Dorsolateral prefrontal cortex (tissue), 120 donors: ENCODE measurements at regions of chr7 and their contacts with region 1.

Region 1: GRCh38 chr7:99325545-99326407 is at the start of gene ARPC1A:
- DNase-seq: peak; percentile 60 to 91 (median 76)
- H3K4me3 ChIP-seq: peak within 1 kb of the TSS; percentile 61 to 100 (median 98)
- H3K27ac ChIP-seq: peak within 1 kb of the TSS in 57 of 59 donors; percentile 29 to 96 (median 83)
- H3K27me3 ChIP-seq: no peaks in the 10 kb centered on the region
- CTCF ChIP-seq: peak in 34 of 56 donors; percentile 3 to 63 (median 30)
- total RNA-seq, gene ARPC1A: 84.1 to 180 (median 126) TPM

Region 2: DNA sequence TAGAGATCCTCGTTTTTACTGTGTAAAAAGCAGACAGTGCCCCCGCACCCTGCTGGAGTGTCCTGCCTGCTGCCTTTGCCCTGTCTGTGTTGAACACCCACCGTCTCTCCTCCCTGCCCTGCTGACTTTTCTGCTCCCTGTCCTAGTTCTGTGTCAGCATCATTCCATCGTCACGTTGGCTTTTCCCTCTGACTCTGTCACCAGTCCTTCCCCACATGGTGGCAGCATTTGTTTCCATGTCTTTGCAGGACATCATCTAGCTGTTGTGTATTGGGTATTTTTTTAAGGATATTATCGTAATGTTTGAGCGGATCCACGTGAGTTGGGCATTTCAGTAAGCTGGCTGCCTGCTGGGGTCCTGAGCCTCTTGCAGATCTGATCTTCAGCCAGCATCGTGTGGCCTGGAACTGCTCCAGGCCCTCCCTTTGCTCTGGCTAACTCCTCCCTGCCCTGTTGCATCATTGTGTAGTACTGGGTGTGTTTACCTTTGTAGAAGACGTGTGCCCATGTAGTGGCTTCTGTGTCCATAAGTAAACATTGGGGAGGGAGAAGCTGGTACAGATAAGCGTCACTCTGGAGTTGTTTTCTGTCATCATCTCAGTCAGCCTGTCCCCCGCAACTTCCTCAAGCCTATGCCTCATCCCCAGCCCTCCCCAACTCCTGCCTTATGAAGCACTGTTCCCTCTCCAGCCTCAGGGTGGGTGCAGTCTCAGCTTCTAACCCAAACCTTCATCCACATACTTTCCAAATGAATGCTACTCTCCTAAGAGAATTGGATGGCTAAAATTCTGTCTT is 403.2 kb before region 1 on chr7:
- intact Hi-C with region 1: loop called in 1 of 2 experiments (anchors 10 kb)
- DNase-seq: peak in 5 of 10 donors; percentile 30 to 75 (median 47)
- H3K4me3 ChIP-seq: peak overlapping the region in 2 of 59 donors; percentile 5 to 9
- H3K27ac ChIP-seq: peak overlapping the region in 29 of 59 donors; percentile 12 to 79 (median 41)
- H3K27me3 ChIP-seq: no peaks in the 10 kb centered on the region
- CTCF ChIP-seq: peak in 48 of 56 donors; percentile 8 to 59 (median 34)

Region 3: GRCh38 chr7:99374103-99375064 is 48.6 kb after region 1 on chr7 and contains the start of gene ARPC1B:
- intact Hi-C with region 1: loop called in 1 of 2 experiments (anchors 5 kb)
- DNase-seq: peak in 1 of 10 donors; percentile 59
- H3K4me3 ChIP-seq: peak within 1 kb of the TSS; percentile 48 to 84 (median 73)
- H3K27ac ChIP-seq: peak within 1 kb of the TSS in 49 of 59 donors; percentile 14 to 89 (median 68)
- H3K27me3 ChIP-seq: no peaks in the 10 kb centered on the region
- CTCF ChIP-seq: no peak
- total RNA-seq, gene ARPC1B: 5.2 to 52.6 (median 17.8) TPM

Region 4: DNA sequence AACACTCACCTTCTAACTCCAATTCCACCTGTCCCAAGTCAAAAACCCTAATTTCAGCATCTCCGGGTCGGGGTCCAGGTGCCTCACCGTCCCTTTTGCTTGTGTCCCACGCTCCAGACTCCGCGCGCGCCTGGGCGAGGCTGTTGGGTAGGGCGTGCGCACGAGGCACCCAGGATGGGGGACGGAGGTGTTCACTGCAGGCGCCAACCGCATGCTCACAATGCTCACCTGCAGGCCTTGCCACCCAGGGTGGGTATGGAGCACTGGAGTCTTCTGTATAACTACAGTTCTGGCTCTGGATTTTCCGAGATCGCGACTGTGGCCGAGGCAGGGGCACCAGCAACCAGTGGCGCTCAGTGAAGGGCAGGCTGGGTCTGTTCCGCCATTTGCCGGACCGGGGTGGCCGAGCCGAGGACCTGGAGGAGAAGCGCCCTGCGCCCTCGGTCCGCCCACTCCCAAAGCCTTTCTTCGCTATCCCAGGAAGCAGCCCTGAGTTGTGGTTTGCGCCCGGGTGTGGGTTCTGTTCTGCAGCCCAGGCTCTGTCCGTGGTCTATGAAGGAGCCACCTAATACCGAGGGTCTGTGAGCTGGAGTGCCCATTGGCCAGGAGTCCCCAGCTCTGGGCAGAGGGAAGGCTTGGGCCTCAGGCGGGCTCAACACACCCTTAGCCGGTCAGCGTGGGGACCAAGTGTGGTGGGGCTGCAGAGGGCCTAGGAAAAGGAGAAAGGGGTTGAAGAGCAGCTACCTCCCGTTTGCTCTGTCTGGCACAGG is 217.5 kb after region 1 on chr7:
- intact Hi-C with region 1: no loop called
- DNase-seq: no peak
- H3K4me3 ChIP-seq: no peak overlapping the region
- H3K27ac ChIP-seq: no peak overlapping the region
- H3K27me3 ChIP-seq: no peaks in the 10 kb centered on the region
- CTCF ChIP-seq: no peak